Endothelial cell of umbilical vein (primary cell): ENCODE measurements at regions of chr3 and their contacts with region 1.

Region 1: GRCh38 chr3:57500506-57500905 is 43.6 kb downstream of the DNAH12 start:
- DNase-seq: peak; percentile 59
- H3K4me3 ChIP-seq: no peak overlapping the region
- H3K27ac ChIP-seq: no peak overlapping the region
- H3K4me1 ChIP-seq: peaks cover 4% of the 10 kb centered on the region
- H3K27me3 ChIP-seq: no peaks in the 10 kb centered on the region
- CTCF ChIP-seq: no peak
- POLR2A ChIP-seq: no peak

Region 2: GRCh38 chr3:57446318-57446841 is 54.1 kb before region 1 on chr3:
- CTCF ChIA-PET with region 1: no interaction called
- POLR2A ChIA-PET with region 1: no interaction called
- dilution Hi-C with region 1: no loop called
- intact Hi-C with region 1: no loop called
- DNase-seq: no peak
- H3K4me3 ChIP-seq: no peak overlapping the region
- H3K27ac ChIP-seq: no peak overlapping the region
- H3K4me1 ChIP-seq: peaks cover 15% of the 10 kb centered on the region
- H3K27me3 ChIP-seq: no peaks in the 10 kb centered on the region
- CTCF ChIP-seq: no peak
- POLR2A ChIP-seq: no peak

Region 3: GRCh38 chr3:57464801-57465200 is 35.7 kb before region 1 on chr3:
- CTCF ChIA-PET with region 1: interaction called, 4 read pairs
- POLR2A ChIA-PET with region 1: no interaction called
- dilution Hi-C with region 1: no loop called
- intact Hi-C with region 1: loop called (anchors 5 kb)
- DNase-seq: peak; percentile 26
- H3K4me3 ChIP-seq: no peak overlapping the region
- H3K27ac ChIP-seq: no peak overlapping the region
- H3K4me1 ChIP-seq: peaks cover 9% of the 10 kb centered on the region
- H3K27me3 ChIP-seq: no peaks in the 10 kb centered on the region
- CTCF ChIP-seq: peak in 1 of 2 donors; percentile 4
- POLR2A ChIP-seq: no peak